ENCODE measurements at regions of chr5 and their contacts with region 1.

Region 1: GRCh38 chr5:132883261-132883834 is 9.9 kb downstream of the LEAP2 start:
- DNase-seq: peak in 6 of 9 donors; percentile 12 to 31 (median 19)
- ATAC-seq: peak; percentile 86
- H3K4me3 ChIP-seq: no peak overlapping the region
- H3K4me3 Mint-ChIP-seq: no peak overlapping the region
- H3K27ac ChIP-seq: no peak overlapping the region
- H3K27ac Mint-ChIP-seq: peak overlapping the region in 5 of 9 donors; percentile 0 to 73 (median 52)
- H3K4me1 ChIP-seq: no peaks in the 10 kb centered on the region
- H3K4me1 Mint-ChIP-seq: peaks cover 0 to 8% (median 0%) of the 10 kb centered on the region in 7 donors
- H3K27me3 ChIP-seq: no peaks in the 10 kb centered on the region
- H3K27me3 Mint-ChIP-seq: no peaks in the 10 kb centered on the region

Region 2: GRCh38 chr5:132829742-132830435 is 53.5 kb before region 1 on chr5:
- CTCF ChIA-PET with region 1: interaction called, 9 read pairs
- POLR2A ChIA-PET with region 1: no interaction called
- intact Hi-C with region 1: loop called (anchors 1 kb)
- DNase-seq: peak; percentile 43 to 78 (median 65)
- ATAC-seq: peak; percentile 93
- H3K4me3 ChIP-seq: peak overlapping the region; percentile 65
- H3K4me3 Mint-ChIP-seq: peak overlapping the region; percentile 79 to 93 (median 88)
- H3K27ac ChIP-seq: no peak overlapping the region
- H3K27ac Mint-ChIP-seq: peak overlapping the region in 3 of 9 donors; percentile 49 to 67 (median 52)
- H3K4me1 ChIP-seq: no peaks in the 10 kb centered on the region
- H3K4me1 Mint-ChIP-seq: peaks cover 0 to 19% (median 12%) of the 10 kb centered on the region in 7 donors
- H3K27me3 ChIP-seq: peaks cover 2 to 12% of the 10 kb centered on the region in 2 donors
- H3K27me3 Mint-ChIP-seq: peaks cover 35 to 62% (median 42%) of the 10 kb centered on the region in 5 donors

Measured in naive thymus-derived CD4-positive, alpha-beta T cell (primary cell).